Activated CD8-positive, alpha-beta T cell treated with anti-CD3 and anti-CD28 coated beads for 36 hours (primary cell): ENCODE measurements at regions of chr7 and their contacts with region 1.

Region 1: GRCh38 chr7:143240291-143241168 is 18.7 kb downstream of the TAS2R40 start:
- DNase-seq: peak; percentile 84
- ATAC-seq: peak; percentile 82
- H3K4me3 Mint-ChIP-seq: peak overlapping the region; percentile 16
- H3K27ac Mint-ChIP-seq: peak overlapping the region; percentile 49
- H3K4me1 Mint-ChIP-seq: peaks cover 33% of the 10 kb centered on the region
- H3K27me3 Mint-ChIP-seq: no peaks in the 10 kb centered on the region
- CTCF ChIP-seq: peak; percentile 95

Region 2: GRCh38 chr7:143229054-143229790 is 11.3 kb before region 1 on chr7:
- CTCF ChIA-PET with region 1: interaction called, 13 read pairs
- POLR2A ChIA-PET with region 1: no interaction called
- intact Hi-C with region 1: no loop called
- DNase-seq: no peak
- ATAC-seq: no peak
- H3K4me3 Mint-ChIP-seq: no peak overlapping the region
- H3K27ac Mint-ChIP-seq: no peak overlapping the region
- H3K4me1 Mint-ChIP-seq: no peaks in the 10 kb centered on the region
- H3K27me3 Mint-ChIP-seq: no peaks in the 10 kb centered on the region
- CTCF ChIP-seq: no peak

Region 3: GRCh38 chr7:143269251-143269650 is 28.7 kb after region 1 on chr7:
- CTCF ChIA-PET with region 1: interaction called, 48 read pairs
- POLR2A ChIA-PET with region 1: no interaction called
- intact Hi-C with region 1: no loop called
- DNase-seq: no peak
- ATAC-seq: no peak
- H3K4me3 Mint-ChIP-seq: no peak overlapping the region
- H3K27ac Mint-ChIP-seq: peak overlapping the region; percentile 26
- H3K4me1 Mint-ChIP-seq: peaks cover 38% of the 10 kb centered on the region
- H3K27me3 Mint-ChIP-seq: no peaks in the 10 kb centered on the region
- CTCF ChIP-seq: no peak

Region 4: GRCh38 chr7:143299840-143300239 is 59.3 kb after region 1 on chr7:
- CTCF ChIA-PET with region 1: interaction called, 211 read pairs
- POLR2A ChIA-PET with region 1: interaction called, 7 read pairs
- intact Hi-C with region 1: no loop called
- DNase-seq: peak; percentile 67
- ATAC-seq: peak; percentile 90
- H3K4me3 Mint-ChIP-seq: no peak overlapping the region
- H3K27ac Mint-ChIP-seq: no peak overlapping the region
- H3K4me1 Mint-ChIP-seq: peaks cover 51% of the 10 kb centered on the region
- H3K27me3 Mint-ChIP-seq: no peaks in the 10 kb centered on the region
- CTCF ChIP-seq: peak; percentile 52

Region 5: DNA sequence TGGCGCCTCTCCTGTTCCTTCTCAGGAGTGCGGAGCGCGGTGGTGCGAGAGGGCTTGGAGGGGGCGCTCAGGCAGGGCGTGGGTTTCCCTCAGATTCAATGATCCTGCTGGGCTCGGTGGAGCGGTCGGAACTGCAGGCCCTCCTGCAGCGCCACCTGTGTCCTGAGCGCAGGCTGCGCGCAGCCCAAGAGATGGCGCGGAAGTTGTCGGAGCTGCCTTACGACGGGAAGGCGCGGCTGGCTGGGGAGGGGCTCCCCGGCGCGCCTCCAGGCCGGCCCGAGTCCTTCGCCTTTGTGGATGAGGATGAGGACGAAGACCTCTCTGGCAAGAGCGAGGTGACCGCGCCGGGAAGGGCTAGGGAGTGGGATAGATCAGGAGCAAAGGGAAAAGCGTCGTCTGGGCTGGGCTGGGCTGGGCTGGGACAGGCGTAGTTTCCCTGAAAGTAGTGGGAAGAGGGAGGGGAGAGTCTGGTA is 104.9 kb after region 1 on chr7:
- CTCF ChIA-PET with region 1: interaction called, 15 read pairs
- POLR2A ChIA-PET with region 1: no interaction called
- intact Hi-C with region 1: no loop called
- DNase-seq: peak; percentile 82
- ATAC-seq: peak; percentile 100
- H3K4me3 Mint-ChIP-seq: peak overlapping the region; percentile 65
- H3K27ac Mint-ChIP-seq: no peak overlapping the region
- H3K4me1 Mint-ChIP-seq: peaks cover 7% of the 10 kb centered on the region
- H3K27me3 Mint-ChIP-seq: no peaks in the 10 kb centered on the region
- CTCF ChIP-seq: peak; percentile 67

Region 6: GRCh38 chr7:143385891-143386781 is 145.6 kb after region 1 on chr7:
- CTCF ChIA-PET with region 1: interaction called, 10 read pairs
- POLR2A ChIA-PET with region 1: no interaction called
- intact Hi-C with region 1: no loop called
- DNase-seq: peak; percentile 40
- ATAC-seq: peak; percentile 21
- H3K4me3 Mint-ChIP-seq: no peak overlapping the region
- H3K27ac Mint-ChIP-seq: no peak overlapping the region
- H3K4me1 Mint-ChIP-seq: peaks cover 11% of the 10 kb centered on the region
- H3K27me3 Mint-ChIP-seq: no peaks in the 10 kb centered on the region
- CTCF ChIP-seq: no peak

Region 7: DNA sequence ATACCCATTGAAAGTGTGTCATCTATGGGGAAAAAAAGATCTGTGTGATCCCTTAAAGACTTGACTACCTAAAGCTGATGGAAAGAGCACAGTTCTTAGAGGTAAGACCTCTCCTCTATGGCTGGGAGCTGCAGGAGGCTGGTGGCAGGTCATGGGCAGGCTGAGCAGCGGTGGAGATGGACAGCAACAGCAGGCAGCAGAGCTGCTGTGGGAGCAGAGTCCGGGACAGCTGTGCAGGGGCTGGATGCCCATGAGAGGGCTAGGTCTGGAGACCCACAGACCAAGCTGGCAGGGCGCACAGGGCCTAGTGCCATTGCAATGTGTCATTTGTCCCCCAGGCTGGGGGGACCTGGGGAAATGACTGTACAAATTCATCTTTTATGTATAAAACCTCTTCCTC is 181.5 kb after region 1 on chr7:
- CTCF ChIA-PET with region 1: interaction called, 79 read pairs
- POLR2A ChIA-PET with region 1: no interaction called
- intact Hi-C with region 1: loop called (anchors 2 kb)
- DNase-seq: no peak
- ATAC-seq: no peak
- H3K4me3 Mint-ChIP-seq: no peak overlapping the region
- H3K27ac Mint-ChIP-seq: no peak overlapping the region
- H3K4me1 Mint-ChIP-seq: peaks cover 13% of the 10 kb centered on the region
- H3K27me3 Mint-ChIP-seq: no peaks in the 10 kb centered on the region
- CTCF ChIP-seq: no peak

Region 8: DNA sequence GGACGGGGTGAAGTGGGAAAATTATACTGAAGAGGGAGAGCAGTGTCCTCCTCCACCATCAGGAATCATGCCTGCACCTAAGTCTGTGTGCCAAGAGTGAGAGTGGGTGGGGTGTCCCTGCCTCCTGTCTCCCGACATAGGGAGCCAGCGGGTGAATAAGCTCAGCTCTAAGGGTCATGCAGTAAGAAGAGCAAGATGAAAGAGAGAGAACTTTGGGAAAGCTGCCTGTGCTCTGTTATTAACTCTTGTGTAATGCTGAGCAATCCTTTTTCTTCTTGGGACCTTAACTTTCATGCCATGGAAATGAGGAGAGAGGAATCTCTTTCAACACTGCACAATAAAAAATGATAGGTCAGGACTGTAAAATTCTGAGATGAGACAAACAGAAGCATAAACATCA is 669.3 kb after region 1 on chr7:
- CTCF ChIA-PET with region 1: no interaction called
- POLR2A ChIA-PET with region 1: no interaction called
- intact Hi-C with region 1: no loop called
- DNase-seq: no peak
- ATAC-seq: no peak
- H3K4me3 Mint-ChIP-seq: no peak overlapping the region
- H3K27ac Mint-ChIP-seq: no peak overlapping the region
- H3K4me1 Mint-ChIP-seq: peaks cover 18% of the 10 kb centered on the region
- H3K27me3 Mint-ChIP-seq: peaks cover 10% of the 10 kb centered on the region
- CTCF ChIP-seq: no peak